Gastrocnemius medialis (tissue), 4 donors: ENCODE measurements at regions of chr6 and their contacts with region 1.

Region 1: GRCh38 chr6:130020907-130021629 is 2.7 kb downstream of the L3MBTL3 start:
- DNase-seq: peak; percentile 74
- ATAC-seq: peak; percentile 83 to 86
- H3K4me3 ChIP-seq: peak overlapping the region; percentile 62 to 89 (median 76)
- H3K27ac ChIP-seq: peak overlapping the region; percentile 61 to 79 (median 76)
- H3K4me1 ChIP-seq: peaks cover 0 to 5% of the 10 kb centered on the region in 2 donors
- H3K27me3 ChIP-seq: no peaks in the 10 kb centered on the region
- CTCF ChIP-seq: peak; percentile 57 to 81 (median 74)
- POLR2A ChIP-seq: peak in 1 of 2 donors; percentile 28

Region 2: GRCh38 chr6:129498950-129499842 is 521.9 kb before region 1 on chr6:
- in situ Hi-C with region 1: no loop called
- intact Hi-C with region 1: loop called (anchors 10 kb)
- DNase-seq: no peak
- ATAC-seq: peak; percentile 38 to 50
- H3K4me3 ChIP-seq: no peak overlapping the region
- H3K27ac ChIP-seq: peak overlapping the region in 2 of 4 donors; percentile 10 to 86
- H3K4me1 ChIP-seq: peaks cover 41 to 53% of the 10 kb centered on the region in 2 donors
- H3K27me3 ChIP-seq: no peaks in the 10 kb centered on the region
- CTCF ChIP-seq: peak; percentile 41 to 73 (median 59)
- POLR2A ChIP-seq: no peak

Region 3: DNA sequence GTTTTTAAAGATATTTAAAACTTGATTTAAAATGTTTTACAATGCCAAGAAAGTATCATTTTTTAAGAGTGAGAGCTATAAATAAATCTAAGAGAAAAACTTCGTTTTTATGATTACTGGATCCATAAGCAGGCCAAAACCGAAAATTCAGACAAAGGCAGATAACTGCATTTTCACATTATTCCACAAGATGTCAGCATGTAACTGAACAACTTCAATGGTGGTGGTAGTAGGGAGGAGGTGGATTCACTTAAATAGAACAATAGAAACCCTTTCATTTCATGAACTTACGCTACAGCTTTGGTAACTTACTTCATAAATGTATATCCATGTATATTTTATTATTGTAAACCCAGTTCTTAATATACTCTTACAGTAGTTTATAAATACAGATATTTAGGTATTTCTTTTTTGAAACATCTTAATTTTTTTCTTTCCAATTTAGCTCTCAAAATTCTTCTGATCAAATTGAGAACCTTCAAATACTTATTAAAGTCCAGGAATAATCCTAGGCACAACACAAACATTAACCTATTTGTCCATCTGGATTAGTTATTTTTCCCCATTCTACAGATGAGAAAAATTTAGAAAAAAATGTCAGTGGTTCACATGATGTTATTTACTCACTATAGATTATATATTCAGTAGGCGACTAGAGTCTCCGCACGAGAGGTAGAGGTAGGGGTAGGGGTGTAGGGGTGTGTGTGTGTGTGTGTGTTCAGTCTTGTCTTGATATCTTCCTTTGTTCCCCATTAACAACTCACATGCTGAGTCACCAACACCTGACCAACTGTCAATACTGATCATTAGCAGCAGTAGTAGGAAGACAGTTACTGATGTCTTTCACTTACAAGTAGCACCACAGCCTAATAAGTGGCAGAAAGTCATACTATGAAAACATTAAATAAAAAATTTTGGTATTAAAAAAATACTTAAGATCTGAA is 422.6 kb before region 1 on chr6:
- in situ Hi-C with region 1: loop called (anchors 10 kb)
- intact Hi-C with region 1: loop called (anchors 2 kb)
- DNase-seq: no peak
- ATAC-seq: peak; percentile 74 to 91
- H3K4me3 ChIP-seq: no peak overlapping the region
- H3K27ac ChIP-seq: peak overlapping the region in 1 of 4 donors; percentile 25
- H3K4me1 ChIP-seq: peaks cover 3 to 6% of the 10 kb centered on the region in 2 donors
- H3K27me3 ChIP-seq: no peaks in the 10 kb centered on the region
- CTCF ChIP-seq: peak; percentile 63 to 90 (median 84)
- POLR2A ChIP-seq: no peak

Region 4: DNA sequence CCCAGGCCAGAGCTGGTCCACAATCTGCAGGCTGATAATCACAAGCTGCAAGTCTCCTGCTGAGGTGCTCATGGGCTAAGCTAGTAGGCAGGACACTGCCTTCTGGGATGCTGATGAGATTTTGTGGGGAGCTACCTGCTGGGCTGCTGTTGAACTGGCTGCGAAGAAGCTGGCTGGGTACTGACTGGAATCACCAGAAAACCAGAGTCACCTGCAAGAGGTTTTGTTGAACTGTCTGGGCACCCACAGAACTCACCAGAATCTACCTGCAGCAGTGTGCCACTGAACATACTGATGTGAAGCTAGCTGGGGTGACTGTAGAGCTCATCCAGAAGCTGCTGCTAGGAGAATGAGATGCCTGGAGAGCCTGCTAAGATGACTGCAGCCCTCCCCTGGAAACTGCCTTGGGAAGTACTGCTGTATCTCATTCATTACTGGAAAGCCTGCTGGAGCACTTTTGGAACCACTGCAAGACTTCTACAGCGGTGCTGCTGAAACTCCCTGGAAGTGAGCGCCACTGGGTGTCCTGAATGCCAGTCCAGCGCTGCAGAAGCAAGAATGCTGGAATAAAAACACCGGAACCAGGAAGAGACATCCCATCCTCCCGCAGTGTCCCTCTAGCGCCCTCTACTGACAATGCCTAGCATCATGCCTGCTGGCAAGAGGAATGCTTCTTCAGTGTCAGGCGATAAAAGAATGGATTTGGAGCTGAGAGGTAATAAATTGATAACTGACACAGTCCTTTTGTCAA is 246.2 kb before region 1 on chr6:
- in situ Hi-C with region 1: loop called in 1 of 4 experiments (anchors 10 kb)
- intact Hi-C with region 1: no loop called
- DNase-seq: peak; percentile 41 to 56
- ATAC-seq: peak in 1 of 2 donors; percentile 85
- H3K4me3 ChIP-seq: peak overlapping the region in 1 of 4 donors; percentile 47
- H3K27ac ChIP-seq: no peak overlapping the region
- H3K4me1 ChIP-seq: no peaks in the 10 kb centered on the region
- H3K27me3 ChIP-seq: peaks cover 0 to 4% (median 0%) of the 10 kb centered on the region in 3 donors
- CTCF ChIP-seq: peak; percentile 64 to 90 (median 71)
- POLR2A ChIP-seq: no peak

Region 5: DNA sequence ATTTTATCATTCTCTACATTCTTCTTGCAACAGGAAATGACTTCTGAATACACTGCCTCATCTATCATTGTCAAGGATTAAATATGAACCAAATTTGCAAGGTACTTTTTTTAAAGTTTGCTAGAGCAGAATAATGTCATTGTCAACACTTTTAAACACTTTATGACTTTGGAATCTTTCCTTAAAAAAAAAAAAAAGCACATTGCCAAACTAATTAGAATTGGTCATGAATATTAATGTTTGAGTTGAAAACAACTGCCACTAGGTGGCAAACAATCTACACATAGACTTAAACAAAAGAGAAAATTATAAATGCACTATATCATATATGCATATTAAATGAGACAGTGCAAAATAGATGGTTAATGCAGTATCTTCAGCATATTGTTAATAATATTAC is 127.4 kb before region 1 on chr6:
- in situ Hi-C with region 1: loop called in 1 of 4 experiments (anchors 10 kb)
- intact Hi-C with region 1: loop called (anchors 5 kb)
- DNase-seq: no peak
- ATAC-seq: no peak
- H3K4me3 ChIP-seq: no peak overlapping the region
- H3K27ac ChIP-seq: no peak overlapping the region
- H3K4me1 ChIP-seq: no peaks in the 10 kb centered on the region
- H3K27me3 ChIP-seq: no peaks in the 10 kb centered on the region
- CTCF ChIP-seq: peak in 2 of 5 experiments; percentile 36 to 40
- POLR2A ChIP-seq: no peak

Region 6: GRCh38 chr6:129936329-129937165 is 84.5 kb before region 1 on chr6:
- in situ Hi-C with region 1: no loop called
- intact Hi-C with region 1: loop called (anchors 5 kb)
- DNase-seq: no peak
- ATAC-seq: peak in 1 of 2 donors; percentile 36
- H3K4me3 ChIP-seq: no peak overlapping the region
- H3K27ac ChIP-seq: no peak overlapping the region
- H3K4me1 ChIP-seq: no peaks in the 10 kb centered on the region
- H3K27me3 ChIP-seq: no peaks in the 10 kb centered on the region
- CTCF ChIP-seq: peak in 2 of 5 experiments; percentile 4 to 33
- POLR2A ChIP-seq: no peak